ENCODE measurements at regions of chr6 and their contacts with region 1.

Region 1: DNA sequence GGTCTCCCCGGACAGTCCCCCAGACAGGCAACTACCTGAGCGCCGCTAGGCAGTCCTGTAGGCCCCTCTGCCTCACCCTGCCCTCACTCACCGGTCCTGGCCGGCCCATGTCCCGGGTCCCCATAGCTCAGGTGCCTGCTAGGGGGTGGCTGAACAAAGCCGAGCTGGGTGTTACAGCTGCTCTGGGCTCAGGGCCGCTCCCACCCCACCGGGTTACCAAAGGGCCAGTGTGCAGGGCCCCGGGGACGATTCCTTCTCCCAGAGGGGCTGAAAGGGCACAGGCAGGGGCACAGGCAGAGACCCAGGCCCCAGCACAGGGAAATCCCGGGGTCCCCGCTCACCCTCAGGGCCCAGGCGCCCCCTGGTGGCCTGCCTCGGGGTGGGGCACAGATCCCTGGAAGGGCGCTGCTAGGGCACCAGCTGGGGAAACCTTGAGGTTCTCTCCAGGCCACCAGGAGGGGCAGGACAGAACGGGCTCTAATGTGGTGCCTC is 118.4 kb downstream of the GRM4 start:
- DNase-seq: peak; percentile 7
- H3K4me3 ChIP-seq: no peak overlapping the region
- H3K27ac ChIP-seq: no peak overlapping the region
- H3K4me1 ChIP-seq: no peaks in the 10 kb centered on the region
- H3K27me3 ChIP-seq: no peaks in the 10 kb centered on the region
- CTCF ChIP-seq: peak; percentile 74 to 90
- POLR2A ChIP-seq: no peak

Region 2: DNA sequence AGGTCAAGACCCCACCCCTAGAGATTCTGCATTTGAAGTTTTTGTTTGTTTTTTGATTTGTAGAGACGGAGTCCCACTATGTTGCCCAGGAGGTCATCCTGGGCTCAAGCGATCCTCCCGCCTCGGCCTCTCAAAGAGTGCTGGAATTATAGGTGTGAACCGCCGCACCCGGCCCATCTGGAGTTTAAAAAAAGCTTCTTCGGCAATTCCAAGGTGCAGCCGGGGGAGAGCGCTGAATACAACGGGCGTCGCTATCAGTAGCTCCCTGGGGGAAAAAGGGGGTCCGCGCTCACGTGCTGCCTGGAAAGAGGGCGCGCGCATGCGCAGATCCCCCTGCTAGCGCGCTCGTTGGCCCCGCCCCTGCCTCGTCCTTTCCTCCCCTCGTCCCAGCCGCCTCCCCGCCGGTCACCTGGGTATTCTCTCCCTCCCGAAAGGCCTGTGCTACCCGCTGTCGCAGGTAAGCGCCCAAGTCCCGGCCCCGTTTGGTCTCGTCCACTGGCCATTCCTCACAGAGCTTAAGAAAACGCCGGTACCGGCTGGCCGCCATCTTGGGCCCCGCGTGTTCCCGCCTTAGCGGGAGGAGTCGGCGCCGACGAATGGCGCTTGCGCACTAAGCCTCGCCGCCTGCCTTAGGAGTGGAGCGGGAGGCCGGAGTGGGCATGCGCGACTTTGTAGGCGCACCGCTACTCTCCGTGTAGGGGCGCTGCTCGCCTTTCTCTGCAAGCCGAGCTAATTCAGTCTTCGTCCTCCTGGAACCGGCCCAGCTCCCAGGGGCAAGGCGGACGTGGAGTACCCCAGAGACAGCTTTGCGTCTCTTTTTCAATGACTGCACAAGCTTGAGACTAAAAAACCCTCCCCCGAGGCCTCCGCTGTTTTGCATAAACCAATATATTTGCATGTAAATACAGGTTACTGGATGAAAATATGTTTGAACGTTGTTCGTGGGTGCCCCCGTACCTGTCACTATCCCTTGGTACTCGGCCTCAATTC is 316.1 kb before region 1 on chr6 and contains the start of gene UQCC2:
- CTCF ChIA-PET with region 1: interaction called, 19 read pairs
- POLR2A ChIA-PET with region 1: no interaction called
- dilution Hi-C with region 1: no loop called
- intact Hi-C with region 1: loop called (anchors 1 kb)
- DNase-seq: peak; percentile 97
- H3K4me3 ChIP-seq: peak within 1 kb of the TSS; percentile 74 to 92 (median 85)
- H3K27ac ChIP-seq: peak within 1 kb of the TSS; percentile 95
- H3K4me1 ChIP-seq: peaks cover 17% of the 10 kb centered on the region
- H3K27me3 ChIP-seq: no peaks in the 10 kb centered on the region
- CTCF ChIP-seq: peak; percentile 57 to 75
- POLR2A ChIP-seq: peak; percentile 97
- total RNA-seq, gene UQCC2: 91.5 and 95.3 TPM in 2 replicates

Region 3: DNA sequence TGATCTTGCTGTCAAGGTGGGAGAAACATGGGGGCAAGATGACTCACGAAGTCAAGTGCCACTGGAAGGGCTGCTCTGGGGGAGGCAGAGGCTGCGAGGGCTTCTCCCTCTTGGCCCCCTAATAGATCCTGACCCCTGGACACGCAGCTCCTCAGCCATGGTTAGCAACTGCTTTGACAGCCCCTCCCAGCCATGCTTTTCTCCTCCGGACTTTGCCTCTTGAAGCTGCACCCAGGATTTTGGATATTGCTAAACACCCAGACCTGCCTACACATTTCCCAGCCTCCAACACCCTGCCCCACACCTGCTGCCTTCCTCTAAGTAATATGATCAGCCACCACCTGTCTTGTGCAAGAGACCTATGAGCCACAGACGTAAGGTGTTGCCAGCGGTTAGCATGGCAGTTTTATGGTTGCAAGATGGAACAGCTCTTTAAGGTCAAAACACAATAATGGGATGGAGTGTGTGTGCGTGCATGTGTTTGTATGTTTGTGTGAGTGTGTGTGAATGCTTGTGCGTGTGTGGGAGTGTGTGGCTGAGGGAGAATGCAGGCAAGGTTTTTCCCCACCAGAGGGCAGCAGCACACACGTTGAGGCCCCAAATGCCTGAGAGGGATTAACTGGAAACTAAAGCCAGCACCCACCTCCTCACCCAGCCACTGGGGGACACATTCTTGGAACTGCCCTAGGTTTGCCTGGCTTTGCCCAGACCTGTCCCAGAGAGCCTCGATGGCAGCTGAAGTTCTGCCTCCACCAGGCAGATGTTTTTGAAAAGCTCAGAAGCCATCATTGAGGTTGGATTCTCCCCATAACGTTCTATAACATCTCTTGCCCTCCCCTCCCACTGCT is 283.3 kb before region 1 on chr6:
- CTCF ChIA-PET with region 1: interaction called, 122 read pairs
- POLR2A ChIA-PET with region 1: no interaction called
- dilution Hi-C with region 1: no loop called
- intact Hi-C with region 1: loop called (anchors 1 kb)
- DNase-seq: peak; percentile 72
- H3K4me3 ChIP-seq: no peak overlapping the region
- H3K27ac ChIP-seq: no peak overlapping the region
- H3K4me1 ChIP-seq: no peaks in the 10 kb centered on the region
- H3K27me3 ChIP-seq: peaks cover 4 to 9% of the 10 kb centered on the region in 2 experiments
- CTCF ChIP-seq: peak; percentile 90 to 93
- POLR2A ChIP-seq: no peak

Region 4: DNA sequence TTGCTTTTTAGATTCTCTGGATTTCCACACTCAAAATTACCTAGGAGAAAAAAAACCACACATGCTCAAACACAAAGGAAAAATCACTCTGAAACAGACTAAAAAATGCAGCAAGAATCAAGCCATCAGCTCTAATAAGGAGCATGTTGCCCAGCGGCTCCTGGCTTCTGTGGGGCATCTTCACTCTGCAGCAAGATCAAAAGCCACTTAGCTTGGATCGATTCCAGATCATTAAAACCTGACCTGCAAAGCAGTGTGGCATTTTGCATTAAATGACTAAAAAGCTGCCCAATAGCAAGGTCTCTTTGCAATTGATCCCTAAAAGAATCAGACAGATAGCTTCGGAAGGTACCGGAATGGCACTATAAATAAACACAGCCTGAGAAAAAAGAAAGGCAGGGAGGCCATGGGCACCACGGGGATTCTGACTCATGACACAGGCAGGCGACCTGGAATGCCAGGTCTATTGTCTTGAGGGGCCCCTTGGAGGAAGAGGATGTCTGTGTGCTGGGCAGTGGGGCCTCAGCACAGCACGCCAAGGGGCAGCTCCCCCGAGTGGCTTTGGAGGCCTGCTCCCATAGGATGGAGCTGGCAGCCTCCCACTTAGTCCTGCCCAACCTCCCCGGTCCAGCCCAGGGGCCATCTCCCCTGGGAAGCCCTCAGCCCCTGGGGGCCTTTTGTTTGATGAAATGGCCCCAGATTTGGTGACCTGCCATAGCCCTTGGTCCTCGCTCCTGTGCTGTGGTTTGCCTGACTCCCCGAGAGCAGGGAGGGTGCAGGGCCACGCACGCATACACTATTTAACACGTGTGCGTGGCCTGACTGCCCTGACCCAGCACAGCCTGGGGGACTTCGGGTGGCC is 246.1 kb before region 1 on chr6:
- CTCF ChIA-PET with region 1: interaction called, 15 read pairs
- POLR2A ChIA-PET with region 1: no interaction called
- dilution Hi-C with region 1: no loop called
- intact Hi-C with region 1: no loop called
- DNase-seq: peak; percentile 92
- H3K4me3 ChIP-seq: peak overlapping the region in 1 of 3 experiments; percentile 13
- H3K27ac ChIP-seq: peak overlapping the region; percentile 96
- H3K4me1 ChIP-seq: peaks cover 56% of the 10 kb centered on the region
- H3K27me3 ChIP-seq: no peaks in the 10 kb centered on the region
- CTCF ChIP-seq: no peak
- POLR2A ChIP-seq: peak; percentile 71

Region 5: DNA sequence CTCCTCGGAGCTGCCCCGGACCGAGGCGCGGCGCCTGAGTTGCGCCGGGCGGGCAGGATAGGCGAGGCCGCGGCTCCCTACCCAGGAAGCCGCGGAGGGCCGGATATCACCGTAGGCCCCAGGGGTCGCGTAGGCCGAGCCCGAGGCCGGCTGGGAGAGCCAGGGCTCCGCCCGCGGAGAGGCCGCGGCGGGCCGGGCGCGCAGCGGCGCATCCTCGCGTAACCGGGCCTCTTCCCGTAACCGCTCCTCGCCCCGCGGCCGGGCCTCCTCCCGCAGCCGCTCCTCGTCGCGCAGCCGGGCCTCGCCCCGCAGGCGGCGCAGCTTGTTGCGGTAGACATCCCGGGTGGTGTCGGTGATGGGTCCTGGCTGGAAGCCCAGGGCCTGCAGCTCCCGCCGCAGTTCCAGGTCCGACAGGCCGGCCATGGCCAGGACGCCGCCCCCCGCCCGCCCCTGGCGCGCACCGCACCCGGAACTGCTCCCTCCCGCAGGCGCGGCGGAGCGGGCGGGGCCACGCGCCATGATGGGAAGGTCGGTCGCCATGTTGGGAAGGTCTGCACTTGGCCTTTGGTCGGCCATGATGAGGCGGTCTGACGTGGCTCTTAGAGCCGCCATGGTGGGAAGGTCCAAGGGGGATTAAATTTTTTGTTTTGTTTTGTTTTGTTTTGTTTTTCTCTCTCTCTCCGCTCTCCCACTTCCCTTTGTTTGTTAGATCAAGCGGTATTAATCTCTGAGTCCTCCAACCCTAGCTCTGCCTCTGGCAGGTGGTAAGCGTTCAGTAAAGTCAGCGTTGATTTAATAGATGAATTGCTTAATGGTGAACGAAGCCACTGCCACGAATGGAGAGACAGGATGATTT is 238.6 kb before region 1 on chr6 and contains the start of gene LEMD2:
- CTCF ChIA-PET with region 1: interaction called, 16 read pairs
- POLR2A ChIA-PET with region 1: no interaction called
- dilution Hi-C with region 1: no loop called
- intact Hi-C with region 1: no loop called
- DNase-seq: peak; percentile 94
- H3K4me3 ChIP-seq: peak within 1 kb of the TSS; percentile 48 to 83 (median 76)
- H3K27ac ChIP-seq: peak within 1 kb of the TSS; percentile 94
- H3K4me1 ChIP-seq: peaks cover 41% of the 10 kb centered on the region
- H3K27me3 ChIP-seq: peaks cover 0 to 2% of the 10 kb centered on the region in 2 experiments
- CTCF ChIP-seq: no peak
- POLR2A ChIP-seq: peak; percentile 94
- total RNA-seq, gene LEMD2: 81.8 and 84.3 TPM in 2 replicates